Breast epithelium (tissue), 4 donors: ENCODE measurements at regions of chr1 and their contacts with region 1.

Region 1: DNA sequence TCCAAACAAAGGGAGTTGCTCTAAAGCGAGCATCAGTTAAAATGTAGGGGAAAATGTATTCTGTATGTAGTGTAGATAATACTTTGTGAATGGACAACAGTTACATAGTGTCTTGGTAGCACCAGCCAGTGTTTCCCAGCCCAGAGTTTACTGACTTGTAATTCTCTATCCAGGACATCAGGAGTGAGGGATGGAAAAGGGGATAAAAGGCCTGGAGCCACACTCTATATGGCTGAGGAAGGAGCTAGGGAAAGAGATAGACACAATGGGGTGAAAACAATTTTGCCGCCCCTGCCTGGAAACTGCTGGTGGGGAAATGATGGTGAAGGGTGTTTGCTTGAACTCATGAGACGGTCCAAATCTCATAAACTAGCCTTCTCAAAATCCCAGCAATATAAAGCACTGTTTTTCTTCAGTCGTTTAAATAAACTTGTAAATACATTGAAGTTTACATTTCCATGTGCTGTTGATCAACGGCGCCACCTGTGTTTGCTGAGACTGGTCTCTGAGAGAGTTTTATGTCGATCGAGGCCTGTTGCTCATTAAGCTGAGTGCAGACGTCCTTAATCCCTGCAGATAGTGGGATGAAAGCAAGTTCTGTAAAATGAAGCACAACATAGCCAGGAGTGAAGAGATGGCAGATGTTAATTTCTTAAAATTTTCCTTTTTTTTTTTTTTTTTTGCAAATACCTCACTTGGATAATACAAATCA is 27.9 kb upstream of the AGO1 start:
- DNase-seq: no peak
- H3K4me3 ChIP-seq: no peak overlapping the region
- H3K27ac ChIP-seq: no peak overlapping the region
- H3K4me1 ChIP-seq: no peaks in the 10 kb centered on the region
- H3K27me3 ChIP-seq: no peaks in the 10 kb centered on the region
- CTCF ChIP-seq: no peak
- POLR2A ChIP-seq: no peak

Region 2: DNA sequence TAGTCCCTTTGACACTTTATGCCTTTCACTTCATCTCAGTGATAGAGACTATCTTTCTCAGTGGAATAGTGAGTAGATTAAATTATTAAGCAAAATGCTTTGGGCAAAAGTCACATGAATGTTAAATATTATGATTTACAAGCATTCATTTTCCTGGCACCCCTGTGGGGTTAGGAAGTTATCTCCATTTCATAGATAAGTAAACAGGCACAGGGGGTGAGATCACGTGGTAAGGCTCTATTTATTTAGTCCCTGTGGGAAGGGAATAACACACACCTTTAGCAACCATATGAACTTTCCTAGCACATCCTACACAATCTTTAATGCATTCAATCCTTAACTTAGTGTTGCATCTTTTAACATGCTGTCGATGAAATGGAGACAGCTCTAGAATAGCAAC is 226.1 kb before region 1 on chr1:
- intact Hi-C with region 1: no loop called
- DNase-seq: no peak
- H3K4me3 ChIP-seq: no peak overlapping the region
- H3K27ac ChIP-seq: no peak overlapping the region
- H3K4me1 ChIP-seq: no peaks in the 10 kb centered on the region
- H3K27me3 ChIP-seq: no peaks in the 10 kb centered on the region
- CTCF ChIP-seq: no peak
- POLR2A ChIP-seq: no peak

Region 3: DNA sequence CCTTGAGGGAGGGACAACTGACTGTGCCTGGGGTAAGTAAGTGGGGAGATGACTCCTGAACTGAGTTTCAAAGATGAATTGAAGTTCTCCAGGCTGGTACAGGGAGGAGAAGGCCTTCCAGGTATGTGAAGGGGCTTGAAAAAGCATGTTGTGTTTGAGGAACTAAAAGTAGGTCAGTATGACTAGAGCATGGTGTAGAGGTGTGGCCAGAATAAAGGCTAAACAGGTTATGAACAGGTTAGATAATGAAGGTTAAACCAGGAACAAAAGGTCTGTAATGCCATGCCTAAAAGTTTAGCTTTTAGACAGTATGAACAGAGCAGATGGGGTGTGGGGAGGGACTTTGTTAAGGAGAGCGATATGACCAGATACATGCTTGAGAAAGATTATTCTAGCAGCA is 78.0 kb before region 1 on chr1:
- intact Hi-C with region 1: no loop called
- DNase-seq: no peak
- H3K4me3 ChIP-seq: no peak overlapping the region
- H3K27ac ChIP-seq: no peak overlapping the region
- H3K4me1 ChIP-seq: no peaks in the 10 kb centered on the region
- H3K27me3 ChIP-seq: no peaks in the 10 kb centered on the region
- CTCF ChIP-seq: no peak
- POLR2A ChIP-seq: no peak

Region 4: GRCh38 chr1:35925741-35926140 is 70.6 kb after region 1 on chr1:
- intact Hi-C with region 1: loop called (anchors 2 kb)
- DNase-seq: no peak
- H3K4me3 ChIP-seq: no peak overlapping the region
- H3K27ac ChIP-seq: no peak overlapping the region
- H3K4me1 ChIP-seq: no peaks in the 10 kb centered on the region
- H3K27me3 ChIP-seq: no peaks in the 10 kb centered on the region
- CTCF ChIP-seq: no peak
- POLR2A ChIP-seq: no peak